OCI-LY7 (cell line): ENCODE measurements at regions of chr11 and their contacts with region 1.

Region 1: GRCh38 chr11:75820636-75821035 is 5.6 kb downstream of the UVRAG start:
- DNase-seq: no peak
- H3K4me3 ChIP-seq: no peak overlapping the region
- H3K27ac ChIP-seq: peak overlapping the region; percentile 45
- H3K4me1 ChIP-seq: peaks cover 71% of the 10 kb centered on the region
- CTCF ChIP-seq: no peak

Region 2: DNA sequence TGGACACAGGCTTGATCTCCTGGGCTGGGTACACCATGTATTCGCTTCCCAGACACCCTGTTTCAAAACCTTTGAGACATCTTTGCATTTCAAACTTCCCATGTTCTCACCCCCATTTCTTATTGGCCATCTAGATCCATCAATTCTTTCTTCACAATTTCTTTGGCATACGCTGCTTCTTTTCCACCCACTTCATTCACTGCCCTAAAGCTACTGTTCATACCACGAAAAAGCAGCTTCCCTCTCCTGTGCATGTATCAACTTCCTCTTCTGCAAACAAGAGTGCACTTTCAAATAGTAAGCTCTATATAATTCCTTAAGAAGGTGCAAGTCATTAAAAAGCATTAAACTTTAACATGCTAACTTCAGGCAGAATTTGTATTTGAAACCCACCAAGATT is 15.8 kb after region 1 on chr11:
- CTCF ChIA-PET with region 1: interaction called, 3 read pairs
- POLR2A ChIA-PET with region 1: interaction called, 19 read pairs
- intact Hi-C with region 1: no loop called
- DNase-seq: no peak
- H3K4me3 ChIP-seq: no peak overlapping the region
- H3K27ac ChIP-seq: peak overlapping the region; percentile 15
- H3K4me1 ChIP-seq: peaks cover 38% of the 10 kb centered on the region
- CTCF ChIP-seq: no peak

Region 3: GRCh38 chr11:76216536-76217325 is 396.1 kb after region 1 on chr11:
- CTCF ChIA-PET with region 1: no interaction called
- POLR2A ChIA-PET with region 1: no interaction called
- intact Hi-C with region 1: no loop called
- DNase-seq: no peak
- H3K4me3 ChIP-seq: no peak overlapping the region
- H3K27ac ChIP-seq: no peak overlapping the region
- H3K4me1 ChIP-seq: no peaks in the 10 kb centered on the region
- CTCF ChIP-seq: no peak